ENCODE measurements at regions of chr17 and their contacts with region 1.

Region 1: GRCh38 chr17:57671667-57672632 is 73.1 kb downstream of the CCDC182 start:
- DNase-seq: peak; percentile 34
- H3K4me3 ChIP-seq: no peak overlapping the region
- H3K27ac ChIP-seq: no peak overlapping the region
- H3K27me3 ChIP-seq: no peaks in the 10 kb centered on the region
- CTCF ChIP-seq: peak; percentile 98

Region 2: GRCh38 chr17:57257895-57258851 is 413.8 kb before region 1 on chr17:
- CTCF ChIA-PET with region 1: interaction called, 11 read pairs
- POLR2A ChIA-PET with region 1: no interaction called
- DNase-seq: no peak
- H3K4me3 ChIP-seq: peak overlapping the region; percentile 71
- H3K27ac ChIP-seq: no peak overlapping the region
- H3K27me3 ChIP-seq: no peaks in the 10 kb centered on the region
- CTCF ChIP-seq: no peak

Region 3: GRCh38 chr17:57604771-57605674 is 66.9 kb before region 1 on chr17:
- CTCF ChIA-PET with region 1: interaction called, 116 read pairs
- POLR2A ChIA-PET with region 1: no interaction called
- DNase-seq: peak; percentile 18
- H3K4me3 ChIP-seq: no peak overlapping the region
- H3K27ac ChIP-seq: peak overlapping the region; percentile 24
- H3K27me3 ChIP-seq: no peaks in the 10 kb centered on the region
- CTCF ChIP-seq: 0 out of 2 replicates have a peak, but pooled peaks have one; percentile 6

Region 4: GRCh38 chr17:57636985-57637665 is 34.8 kb before region 1 on chr17:
- CTCF ChIA-PET with region 1: interaction called, 11 read pairs
- POLR2A ChIA-PET with region 1: no interaction called
- DNase-seq: no peak
- H3K4me3 ChIP-seq: no peak overlapping the region
- H3K27ac ChIP-seq: peak overlapping the region; percentile 11
- H3K27me3 ChIP-seq: no peaks in the 10 kb centered on the region
- CTCF ChIP-seq: no peak

Region 5: GRCh38 chr17:57691939-57692338 is 20.0 kb after region 1 on chr17:
- CTCF ChIA-PET with region 1: interaction called, 29 read pairs
- POLR2A ChIA-PET with region 1: no interaction called
- DNase-seq: no peak
- H3K4me3 ChIP-seq: no peak overlapping the region
- H3K27ac ChIP-seq: no peak overlapping the region
- H3K27me3 ChIP-seq: peaks cover 2% of the 10 kb centered on the region
- CTCF ChIP-seq: no peak